PC-9 (cell line): ENCODE measurements at regions of chr3 and their contacts with region 1.

Region 1: DNA sequence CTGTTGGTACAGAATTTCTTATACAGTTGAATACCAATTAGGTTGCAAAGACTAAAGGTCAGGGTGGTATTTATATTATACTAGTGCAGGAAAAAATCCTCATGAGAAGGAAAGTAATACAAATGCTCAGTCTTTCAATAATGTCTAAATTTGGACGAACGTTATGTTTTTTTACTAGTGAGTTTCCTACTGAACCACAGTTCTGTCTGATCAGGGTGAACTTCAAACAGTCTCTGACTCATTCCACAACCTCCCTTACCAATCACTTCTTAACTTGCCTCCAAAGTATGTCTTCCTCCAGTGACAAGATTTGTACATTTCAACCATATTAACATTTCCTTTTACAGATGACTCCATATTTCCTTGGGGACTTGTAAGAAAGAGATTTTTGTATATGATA is 3.4 kb downstream of the TMEM212 start:
- DNase-seq: peak in 1 of 2 experiments; percentile 35
- H3K4me3 ChIP-seq: no peak overlapping the region
- H3K27ac ChIP-seq: no peak overlapping the region
- H3K4me1 ChIP-seq: peaks cover 19% of the 10 kb centered on the region
- H3K27me3 ChIP-seq: no peaks in the 10 kb centered on the region
- CTCF ChIP-seq: no peak

Region 2: DNA sequence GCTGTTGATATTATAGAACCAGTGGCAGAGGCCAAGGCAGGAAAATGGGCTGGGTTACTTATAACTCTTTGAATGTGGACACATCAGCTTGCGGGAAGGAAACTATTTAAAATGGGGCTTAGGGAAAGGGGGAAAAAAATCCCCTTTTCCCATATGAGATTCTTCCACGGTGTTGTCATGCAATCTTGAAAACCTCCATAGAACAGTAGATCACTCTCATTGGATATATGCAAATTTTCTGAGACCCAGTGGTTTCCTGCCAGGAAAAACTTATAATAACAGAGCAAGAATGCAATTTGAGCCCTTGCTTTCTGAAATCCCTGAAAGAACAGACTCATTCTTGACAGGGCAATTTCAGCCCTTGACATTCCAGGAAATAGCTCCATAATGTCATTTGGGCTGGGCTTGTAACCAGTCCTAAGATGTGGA is 27.7 kb after region 1 on chr3:
- CTCF ChIA-PET with region 1: no interaction called
- POLR2A ChIA-PET with region 1: no interaction called
- intact Hi-C with region 1: loop called (anchors 1 kb)
- DNase-seq: peak; percentile 44 to 49
- H3K4me3 ChIP-seq: no peak overlapping the region
- H3K27ac ChIP-seq: 0 out of 2 replicates have a peak overlapping the region, but pooled peaks have one; percentile 0
- H3K4me1 ChIP-seq: peaks cover 15% of the 10 kb centered on the region; the same call in 1 of the 2 replicates
- H3K27me3 ChIP-seq: no peaks in the 10 kb centered on the region
- CTCF ChIP-seq: no peak

Region 3: DNA sequence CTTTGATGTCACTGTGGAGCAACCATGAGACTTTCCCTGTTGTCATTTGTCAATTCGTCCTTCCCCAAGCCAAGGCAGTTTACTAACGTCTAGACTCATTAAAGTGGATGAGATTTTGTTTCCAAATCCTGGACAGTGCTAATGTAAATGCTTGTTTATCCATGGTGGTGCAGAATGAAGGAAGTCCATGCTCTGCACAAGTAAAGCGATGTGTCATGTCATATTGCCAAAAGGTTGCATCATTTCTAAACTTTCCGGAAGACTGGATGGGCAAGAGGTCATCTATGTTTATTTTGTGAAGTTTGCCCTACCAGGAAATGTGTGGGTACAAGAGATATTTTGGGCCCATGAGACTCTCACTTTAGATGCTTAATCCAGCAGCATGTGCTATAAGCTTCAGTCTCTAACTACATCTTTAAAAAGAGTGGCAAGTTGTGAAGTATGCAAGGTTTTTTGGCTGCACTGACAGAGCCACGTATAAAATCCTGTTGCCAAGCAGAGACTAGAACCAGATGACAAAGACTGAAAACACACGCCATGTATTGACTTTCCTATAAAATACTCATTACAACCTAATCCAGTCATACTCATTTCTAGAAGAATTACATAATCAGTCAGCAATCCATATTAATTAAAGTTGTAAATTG is 120.7 kb after region 1 on chr3:
- CTCF ChIA-PET with region 1: no interaction called
- POLR2A ChIA-PET with region 1: no interaction called
- intact Hi-C with region 1: loop called (anchors 10 kb)
- DNase-seq: peak; percentile 42 to 96
- H3K4me3 ChIP-seq: no peak overlapping the region; the same call in 1 of the 2 replicates
- H3K27ac ChIP-seq: peak overlapping the region; percentile 98
- H3K4me1 ChIP-seq: peaks cover 49% of the 10 kb centered on the region
- H3K27me3 ChIP-seq: no peaks in the 10 kb centered on the region
- CTCF ChIP-seq: no peak

Region 4: DNA sequence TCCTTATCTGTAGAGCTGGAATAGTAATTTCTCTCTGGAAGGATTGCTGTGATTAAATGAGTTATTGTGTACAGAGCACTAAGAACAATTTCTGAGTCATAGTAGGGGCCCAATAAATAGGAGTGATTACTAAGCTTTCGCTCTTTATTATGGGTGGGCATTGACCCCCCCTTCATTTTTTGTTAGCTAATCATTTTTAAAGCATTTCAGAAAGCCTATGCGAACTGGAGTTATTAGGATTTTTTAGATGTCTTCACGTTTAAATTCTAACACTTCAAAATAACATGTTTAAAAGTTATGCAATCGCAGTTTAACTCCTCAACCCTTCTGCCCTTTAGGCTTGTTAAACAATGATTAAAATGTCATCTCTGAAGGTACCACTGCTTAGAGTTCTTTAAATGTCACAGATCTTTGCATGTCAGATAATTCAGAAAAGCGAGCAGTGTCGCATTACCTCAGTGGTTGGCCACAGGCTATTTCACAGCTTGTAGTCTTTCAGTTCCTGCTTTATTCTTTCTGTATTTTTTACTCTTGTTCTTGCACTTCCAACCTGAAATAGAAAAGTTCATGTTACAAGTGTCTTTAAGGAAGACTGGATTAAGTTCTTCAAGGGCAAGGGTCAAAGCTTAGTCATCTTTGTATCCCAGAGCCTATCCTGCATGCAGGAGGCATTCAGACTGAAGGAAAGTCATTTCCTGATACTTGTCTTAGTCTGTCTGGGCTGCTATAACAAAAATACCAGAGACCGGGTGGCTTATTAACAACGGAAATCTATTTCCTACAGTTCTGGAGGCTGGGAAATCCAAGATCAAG is 295.7 kb after region 1 on chr3:
- CTCF ChIA-PET with region 1: no interaction called
- POLR2A ChIA-PET with region 1: no interaction called
- intact Hi-C with region 1: no loop called
- DNase-seq: peak in 1 of 2 experiments; percentile 91
- H3K4me3 ChIP-seq: peak overlapping the region; percentile 27; the same call in 1 of the 2 replicates
- H3K27ac ChIP-seq: peak overlapping the region; percentile 86
- H3K4me1 ChIP-seq: peaks cover 67% of the 10 kb centered on the region
- H3K27me3 ChIP-seq: no peaks in the 10 kb centered on the region
- CTCF ChIP-seq: no peak